GM10248 (cell line): ENCODE measurements at regions of chr18 and their contacts with region 1.

Region 1: GRCh38 chr18:46915800-46916547 is 1.3 kb downstream of the PIAS2 start:
- DNase-seq: no peak
- CTCF ChIP-seq: no peak

Region 2: DNA sequence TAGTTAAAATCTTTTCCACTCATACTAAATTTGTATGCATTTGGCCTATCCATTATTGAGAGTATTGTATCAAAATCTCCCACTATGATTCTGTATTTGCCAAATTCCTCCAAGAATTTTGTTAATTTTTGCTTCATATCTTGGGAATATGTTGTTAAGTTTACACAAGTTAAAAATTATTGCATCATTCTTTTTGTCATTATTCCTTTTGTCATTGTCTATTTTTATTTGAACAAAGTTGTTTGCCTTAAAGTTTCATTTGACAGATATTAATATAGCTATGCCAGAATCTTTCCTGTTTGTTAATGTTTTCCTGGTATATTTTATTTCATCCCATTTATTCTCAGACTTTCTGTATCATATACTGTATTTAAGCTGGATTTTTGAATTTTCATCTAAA is 300.3 kb before region 1 on chr18:
- CTCF ChIA-PET with region 1: no interaction called
- POLR2A ChIA-PET with region 1: no interaction called
- DNase-seq: no peak
- CTCF ChIP-seq: no peak

Region 3: GRCh38 chr18:46868169-46868921 is 47.6 kb before region 1 on chr18:
- CTCF ChIA-PET with region 1: no interaction called
- POLR2A ChIA-PET with region 1: no interaction called
- DNase-seq: no peak
- CTCF ChIP-seq: no peak

Region 4: DNA sequence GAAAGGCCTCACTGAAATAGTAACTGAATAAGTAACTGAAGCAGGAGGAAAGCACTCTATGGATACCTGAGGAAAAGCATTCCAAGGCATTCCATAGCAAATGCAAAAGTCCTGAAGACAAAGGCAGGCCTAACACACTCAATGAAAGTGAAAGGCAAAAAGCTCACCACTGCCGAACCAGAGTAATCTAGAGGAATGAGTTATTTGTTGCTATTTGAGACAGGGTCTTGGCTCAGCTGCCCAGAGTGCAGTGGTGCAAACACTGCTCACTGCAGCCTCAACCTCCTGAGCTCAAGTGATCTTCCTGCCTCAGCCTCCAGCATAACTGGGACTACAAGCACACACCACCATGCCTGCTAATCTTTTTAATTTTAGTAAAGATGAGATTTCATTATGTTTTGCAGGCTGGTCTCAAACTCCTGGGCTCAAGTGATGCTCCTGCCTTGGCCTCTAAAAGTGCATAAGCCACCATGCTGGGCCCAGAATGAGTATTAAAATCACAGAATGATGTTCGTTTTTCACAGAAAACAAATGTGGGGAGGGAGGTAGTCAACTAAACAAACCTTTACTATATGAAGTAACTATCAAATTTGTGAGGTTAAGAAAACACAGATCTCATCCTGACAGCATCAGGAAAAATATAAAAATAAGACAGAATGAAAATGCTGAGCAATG is 16.6 kb before region 1 on chr18:
- CTCF ChIA-PET with region 1: interaction called, 17 read pairs
- POLR2A ChIA-PET with region 1: interaction called, 5 read pairs
- DNase-seq: peak; percentile 41
- CTCF ChIP-seq: no peak